ENCODE measurements at regions of chr6 and their contacts with region 1.

Region 1: DNA sequence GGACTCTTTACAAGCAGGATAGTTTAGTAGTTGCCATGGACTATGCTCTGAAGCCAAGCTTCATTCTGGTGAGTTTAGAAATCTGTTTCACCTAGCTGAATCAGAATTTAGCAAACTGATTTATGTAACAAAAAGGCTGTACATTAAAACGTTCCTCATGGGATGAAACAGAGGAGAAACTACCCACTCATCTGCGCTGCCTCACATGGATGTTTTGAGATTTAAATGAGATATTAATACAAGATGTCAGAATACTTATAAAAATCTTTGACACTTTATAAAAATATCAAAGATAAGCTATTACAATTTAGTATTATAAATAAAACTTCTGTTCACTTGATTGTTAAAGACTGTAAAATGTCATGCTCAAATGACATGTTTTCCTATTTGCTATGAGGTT is 16.8 kb downstream of the RUNX2 start:
- DNase-seq: no peak
- H3K4me3 ChIP-seq: no peak overlapping the region
- H3K27ac ChIP-seq: no peak overlapping the region
- H3K4me1 ChIP-seq: no peaks in the 10 kb centered on the region
- H3K27me3 ChIP-seq: no peaks in the 10 kb centered on the region
- CTCF ChIP-seq: no peak
- POLR2A ChIP-seq: no peak

Region 2: GRCh38 chr6:45001663-45002062 is 343.2 kb before region 1 on chr6:
- intact Hi-C with region 1: loop called (anchors 10 kb)
- DNase-seq: no peak
- H3K4me3 ChIP-seq: no peak overlapping the region
- H3K27ac ChIP-seq: no peak overlapping the region
- H3K4me1 ChIP-seq: no peaks in the 10 kb centered on the region
- H3K27me3 ChIP-seq: no peaks in the 10 kb centered on the region
- CTCF ChIP-seq: no peak
- POLR2A ChIP-seq: no peak

Region 3: GRCh38 chr6:45388328-45388727 is 43.4 kb after region 1 on chr6:
- intact Hi-C with region 1: no loop called
- DNase-seq: no peak
- H3K4me3 ChIP-seq: no peak overlapping the region
- H3K27ac ChIP-seq: no peak overlapping the region
- H3K4me1 ChIP-seq: no peaks in the 10 kb centered on the region
- H3K27me3 ChIP-seq: no peaks in the 10 kb centered on the region
- CTCF ChIP-seq: no peak
- POLR2A ChIP-seq: no peak

Measured in breast epithelium (tissue), 4 donors.